MCF 10A (cell line): ENCODE measurements at regions of chr14 and their contacts with region 1.

Region 1: DNA sequence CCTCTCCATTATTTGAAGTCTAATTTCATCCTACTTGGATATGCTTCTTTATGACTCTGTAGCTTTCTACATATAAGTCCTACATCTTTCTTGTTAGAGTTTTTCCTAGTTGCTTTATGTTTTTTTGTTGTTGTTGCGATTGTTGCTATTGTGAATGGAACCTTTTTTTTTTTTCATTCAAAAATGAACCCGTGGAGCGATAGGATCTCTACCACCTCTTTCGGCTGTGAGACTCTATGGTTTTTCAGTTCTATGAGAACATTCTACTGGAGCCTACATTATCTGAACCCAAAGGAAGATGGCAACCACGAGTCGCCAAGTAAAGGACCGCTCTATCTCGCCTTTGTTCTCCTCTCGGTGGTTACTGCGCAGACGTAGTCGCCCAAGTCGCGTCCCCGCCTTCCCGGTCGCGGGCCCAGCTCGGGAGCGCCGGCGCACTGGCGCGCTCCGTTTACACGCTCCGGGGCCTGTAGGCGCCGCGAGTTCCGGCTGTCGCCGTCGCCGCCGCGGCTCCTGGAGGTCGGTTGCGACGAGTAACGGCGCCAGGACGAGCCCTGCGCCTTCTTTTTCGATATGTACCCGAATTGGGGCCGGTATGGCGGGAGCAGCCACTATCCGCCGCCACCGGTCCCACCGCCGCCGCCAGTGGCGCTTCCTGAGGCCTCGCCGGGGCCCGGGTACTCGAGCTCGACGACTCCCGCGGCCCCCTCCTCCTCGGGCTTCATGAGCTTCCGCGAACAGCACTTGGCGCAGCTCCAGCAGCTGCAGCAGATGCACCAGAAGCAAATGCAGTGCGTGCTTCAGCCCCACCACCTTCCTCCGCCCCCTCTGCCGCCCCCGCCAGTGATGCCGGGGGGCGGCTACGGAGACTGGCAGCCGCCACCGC is at the start of gene YLPM1:
- DNase-seq: peak; percentile 96
- H3K4me3 Mint-ChIP-seq: peak within 1 kb of the TSS; percentile 98
- H3K27ac Mint-ChIP-seq: peak within 1 kb of the TSS; percentile 98
- H3K4me1 Mint-ChIP-seq: peaks cover 28% of the 10 kb centered on the region
- H3K27me3 Mint-ChIP-seq: no peaks in the 10 kb centered on the region
- CTCF ChIP-seq: peak; percentile 19
- total RNA-seq, gene YLPM1: 40.5 and 43.9 TPM in 2 replicates

Region 2: GRCh38 chr14:74618078-74618952 is 144.8 kb before region 1 on chr14:
- CTCF ChIA-PET with region 1: no interaction called
- POLR2A ChIA-PET with region 1: interaction called, 5 read pairs
- intact Hi-C with region 1: loop called (anchors 5 kb)
- DNase-seq: peak; percentile 92
- H3K4me3 Mint-ChIP-seq: no peak overlapping the region
- H3K27ac Mint-ChIP-seq: peak overlapping the region; percentile 39
- H3K4me1 Mint-ChIP-seq: peaks cover 71% of the 10 kb centered on the region
- H3K27me3 Mint-ChIP-seq: no peaks in the 10 kb centered on the region
- CTCF ChIP-seq: no peak

Region 3: DNA sequence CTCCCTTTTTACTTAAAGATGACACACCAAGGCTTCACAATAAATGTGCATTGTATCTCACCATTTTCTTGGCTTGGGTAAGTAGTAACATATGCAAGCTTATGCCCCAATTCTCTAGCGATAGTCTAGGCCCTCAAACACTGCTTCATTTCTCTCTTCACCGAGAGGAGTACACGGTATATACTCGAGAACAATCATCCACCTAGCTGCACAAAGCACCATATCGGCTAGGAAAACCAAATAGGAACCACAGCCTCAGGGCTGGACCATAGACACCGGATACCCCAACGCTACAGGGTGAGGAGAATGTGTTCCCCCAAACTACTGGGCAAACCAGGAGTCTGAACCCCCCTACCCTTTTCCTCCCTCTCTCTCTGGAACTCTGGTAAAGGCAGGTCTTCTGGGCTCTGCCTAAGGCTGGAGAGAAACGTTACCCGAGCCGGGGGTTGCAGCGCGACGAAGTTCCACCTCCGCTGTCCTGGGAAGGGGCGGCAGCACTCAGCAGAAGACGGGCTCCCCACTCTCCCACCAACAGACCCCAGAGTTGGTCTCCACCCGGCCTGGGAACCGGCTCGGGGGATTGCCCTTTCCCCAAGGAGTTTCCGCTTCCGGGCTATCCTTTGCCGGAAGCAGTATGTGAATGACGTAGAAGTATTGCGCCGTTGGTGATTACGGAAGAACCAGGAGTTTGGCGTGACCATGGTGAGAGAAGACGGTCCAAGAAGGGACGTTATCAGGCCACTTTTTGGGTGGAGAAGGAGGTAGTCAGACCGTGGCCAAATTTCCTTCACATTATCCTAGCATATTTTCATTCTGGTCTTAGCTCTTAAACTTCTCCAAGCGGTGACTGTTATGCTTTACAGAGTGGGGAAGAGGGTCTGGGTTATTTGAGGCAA is 50.4 kb before region 1 on chr14 and contains the starts of genes AREL1 and FCF1:
- CTCF ChIA-PET with region 1: interaction called, 5 read pairs
- POLR2A ChIA-PET with region 1: interaction called, 16 read pairs
- intact Hi-C with region 1: no loop called
- DNase-seq: peak; percentile 89
- H3K4me3 Mint-ChIP-seq: peak within 1 kb of the TSS; percentile 99
- H3K27ac Mint-ChIP-seq: peak within 1 kb of the TSS; percentile 99
- H3K4me1 Mint-ChIP-seq: peaks cover 13% of the 10 kb centered on the region
- H3K27me3 Mint-ChIP-seq: no peaks in the 10 kb centered on the region
- CTCF ChIP-seq: no peak
- total RNA-seq, gene AREL1: 27.7 and 29.8 TPM in 2 replicates
- total RNA-seq, gene FCF1: 61.5 and 62.3 TPM in 2 replicates

Region 4: DNA sequence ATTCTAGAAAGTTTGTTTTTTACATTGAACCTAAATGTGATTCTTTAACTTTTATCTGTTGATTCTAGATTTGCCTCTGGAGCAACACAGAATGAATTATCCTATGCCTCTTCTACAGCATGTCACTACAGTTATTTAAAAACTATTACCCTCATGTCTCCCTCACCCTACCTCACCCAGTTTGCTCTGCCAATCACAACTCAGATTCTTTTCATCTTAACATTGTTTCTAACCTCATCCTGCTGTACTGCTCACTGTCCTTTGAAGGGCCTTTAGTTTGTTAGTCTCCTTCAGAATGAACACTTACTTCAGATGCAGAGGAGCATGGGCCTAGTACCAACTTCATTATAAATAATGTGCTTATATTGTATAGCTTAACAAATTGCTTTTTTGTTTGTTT is 21.5 kb after region 1 on chr14:
- CTCF ChIA-PET with region 1: interaction called, 6 read pairs
- POLR2A ChIA-PET with region 1: interaction called, 28 read pairs
- intact Hi-C with region 1: no loop called
- DNase-seq: no peak
- H3K4me3 Mint-ChIP-seq: no peak overlapping the region
- H3K27ac Mint-ChIP-seq: peak overlapping the region; percentile 18
- H3K4me1 Mint-ChIP-seq: peaks cover 5% of the 10 kb centered on the region
- H3K27me3 Mint-ChIP-seq: no peaks in the 10 kb centered on the region
- CTCF ChIP-seq: no peak

Region 5: GRCh38 chr14:74881431-74882361 is 118.5 kb after region 1 on chr14 and contains the start of gene DLST:
- CTCF ChIA-PET with region 1: no interaction called
- POLR2A ChIA-PET with region 1: interaction called, 10 read pairs
- intact Hi-C with region 1: no loop called
- DNase-seq: peak; percentile 84
- H3K4me3 Mint-ChIP-seq: peak within 1 kb of the TSS; percentile 99
- H3K27ac Mint-ChIP-seq: peak within 1 kb of the TSS; percentile 99
- H3K4me1 Mint-ChIP-seq: peaks cover 50% of the 10 kb centered on the region
- H3K27me3 Mint-ChIP-seq: no peaks in the 10 kb centered on the region
- CTCF ChIP-seq: no peak
- total RNA-seq, gene DLST: 114 and 139 TPM in 2 replicates